H1 (cell line): ENCODE measurements at regions of chr11 and their contacts with region 1.

Region 1: GRCh38 chr11:92845805-92846204 is 123.6 kb upstream of the MTNR1B start:
- DNase-seq: no peak
- H3K4me3 ChIP-seq: no peak overlapping the region
- H3K27ac ChIP-seq: no peak overlapping the region
- H3K4me1 ChIP-seq: peaks cover 0 to 4% (median 3%) of the 10 kb centered on the region in 4 experiments; a peak in 3 of 7 replicates
- H3K27me3 ChIP-seq: no peaks in the 10 kb centered on the region
- CTCF ChIP-seq: no peak
- EP300 ChIP-seq: no peak
- POLR2A ChIP-seq: no peak
- RAD21 ChIP-seq: no peak

Region 2: GRCh38 chr11:92819830-92820229 is 26.0 kb before region 1 on chr11:
- CTCF ChIA-PET with region 1: no interaction called
- POLR2A ChIA-PET with region 1: no interaction called
- DNase-seq: no peak
- H3K4me3 ChIP-seq: no peak overlapping the region
- H3K27ac ChIP-seq: no peak overlapping the region
- H3K4me1 ChIP-seq: 0 out of 7 replicates have a peak, but pooled peaks cover 0 to 2% (median 0%) of the 10 kb centered on the region in 4 experiments
- H3K27me3 ChIP-seq: peaks cover 0 to 2% (median 0%) of the 10 kb centered on the region in 4 experiments; a peak in 1 of 7 replicates
- CTCF ChIP-seq: no peak
- EP300 ChIP-seq: no peak
- POLR2A ChIP-seq: no peak
- RAD21 ChIP-seq: no peak

Region 3: GRCh38 chr11:92861634-92862033 is 15.8 kb after region 1 on chr11:
- CTCF ChIA-PET with region 1: interaction called, 17 read pairs
- POLR2A ChIA-PET with region 1: no interaction called
- DNase-seq: no peak
- H3K4me3 ChIP-seq: no peak overlapping the region
- H3K27ac ChIP-seq: no peak overlapping the region
- H3K4me1 ChIP-seq: peaks cover 0 to 1% (median 0%) of the 10 kb centered on the region in 4 experiments; a peak in 1 of 7 replicates
- H3K27me3 ChIP-seq: no peaks in the 10 kb centered on the region
- CTCF ChIP-seq: peak in 2 of 3 experiments; percentile 37 to 43; a peak in 2 of 4 replicates
- EP300 ChIP-seq: no peak
- POLR2A ChIP-seq: no peak
- RAD21 ChIP-seq: peak; percentile 57 to 67

Region 4: GRCh38 chr11:92892802-92893684 is 47.2 kb after region 1 on chr11:
- CTCF ChIA-PET with region 1: no interaction called
- POLR2A ChIA-PET with region 1: no interaction called
- DNase-seq: no peak
- H3K4me3 ChIP-seq: no peak overlapping the region
- H3K27ac ChIP-seq: no peak overlapping the region
- H3K4me1 ChIP-seq: no peaks in the 10 kb centered on the region
- H3K27me3 ChIP-seq: no peaks in the 10 kb centered on the region
- CTCF ChIP-seq: no peak
- EP300 ChIP-seq: no peak
- POLR2A ChIP-seq: no peak
- RAD21 ChIP-seq: no peak